ENCODE measurements at regions of chr4 and their contacts with region 1.

Region 1: DNA sequence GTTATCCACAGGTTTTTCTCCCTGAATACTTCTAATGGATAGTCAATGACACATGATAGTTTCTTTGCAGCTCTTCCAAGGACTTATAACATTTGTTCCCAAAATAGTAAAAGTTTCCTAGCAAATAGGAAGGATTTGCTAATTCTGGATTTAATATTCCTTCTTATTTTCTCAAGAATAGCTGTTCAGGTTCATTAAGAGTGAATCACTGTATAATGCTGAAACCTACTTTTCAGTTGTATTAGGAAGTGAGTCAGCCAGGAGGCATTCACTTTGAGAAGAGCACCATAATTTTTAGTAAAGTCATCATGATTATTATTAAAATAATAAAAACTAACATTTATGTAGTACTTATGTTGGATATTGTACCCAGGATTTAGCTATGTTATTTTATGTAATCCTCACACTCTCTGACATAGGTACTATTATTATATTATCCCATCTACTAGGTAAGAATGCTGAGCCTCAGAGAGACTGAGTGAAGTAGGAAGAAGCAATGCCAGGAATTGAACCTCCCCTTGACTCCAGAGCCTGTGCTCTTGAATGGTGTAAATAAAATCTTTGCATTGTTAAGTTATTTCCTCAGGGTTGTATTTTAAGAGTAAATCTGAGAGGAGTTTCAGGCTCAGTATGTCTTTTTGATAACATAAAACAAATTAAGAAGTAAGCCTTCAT is 114.8 kb downstream of the REELD1 start:
- DNase-seq: no peak
- CTCF ChIP-seq: no peak

Region 2: GRCh38 chr4:146315184-146315583 is 14.0 kb before region 1 on chr4:
- CTCF ChIA-PET with region 1: interaction called, 12 read pairs
- POLR2A ChIA-PET with region 1: no interaction called
- DNase-seq: no peak
- CTCF ChIP-seq: no peak

Measured in GM10248 (cell line).